Endothelial cell of umbilical vein (primary cell): ENCODE measurements at regions of chr12 and their contacts with region 1.

Region 1: DNA sequence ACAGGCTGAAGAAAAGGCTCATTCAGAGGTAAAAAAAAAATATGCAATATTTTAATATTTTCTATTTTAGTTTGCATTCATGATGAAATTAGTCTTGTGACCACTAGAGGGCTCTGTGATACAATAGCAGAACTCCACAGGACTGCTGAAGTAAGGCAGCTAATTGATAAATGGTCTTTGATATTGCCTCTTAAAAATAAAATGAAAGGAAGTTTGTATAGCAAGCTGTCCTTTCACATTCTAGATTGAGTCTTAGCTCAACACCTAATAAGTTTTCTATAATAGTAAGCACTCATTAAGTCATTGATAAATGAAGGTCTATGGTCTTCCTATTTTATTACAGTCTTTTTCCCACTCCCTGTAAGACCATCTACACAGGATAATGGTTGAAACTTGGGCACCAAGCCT is 315.7 kb downstream of the NAV3 start:
- DNase-seq: peak; percentile 59
- H3K4me3 ChIP-seq: no peak overlapping the region
- H3K27ac ChIP-seq: no peak overlapping the region
- H3K4me1 ChIP-seq: no peaks in the 10 kb centered on the region
- H3K27me3 ChIP-seq: no peaks in the 10 kb centered on the region
- CTCF ChIP-seq: peak; percentile 49 to 54
- POLR2A ChIP-seq: no peak

Region 2: DNA sequence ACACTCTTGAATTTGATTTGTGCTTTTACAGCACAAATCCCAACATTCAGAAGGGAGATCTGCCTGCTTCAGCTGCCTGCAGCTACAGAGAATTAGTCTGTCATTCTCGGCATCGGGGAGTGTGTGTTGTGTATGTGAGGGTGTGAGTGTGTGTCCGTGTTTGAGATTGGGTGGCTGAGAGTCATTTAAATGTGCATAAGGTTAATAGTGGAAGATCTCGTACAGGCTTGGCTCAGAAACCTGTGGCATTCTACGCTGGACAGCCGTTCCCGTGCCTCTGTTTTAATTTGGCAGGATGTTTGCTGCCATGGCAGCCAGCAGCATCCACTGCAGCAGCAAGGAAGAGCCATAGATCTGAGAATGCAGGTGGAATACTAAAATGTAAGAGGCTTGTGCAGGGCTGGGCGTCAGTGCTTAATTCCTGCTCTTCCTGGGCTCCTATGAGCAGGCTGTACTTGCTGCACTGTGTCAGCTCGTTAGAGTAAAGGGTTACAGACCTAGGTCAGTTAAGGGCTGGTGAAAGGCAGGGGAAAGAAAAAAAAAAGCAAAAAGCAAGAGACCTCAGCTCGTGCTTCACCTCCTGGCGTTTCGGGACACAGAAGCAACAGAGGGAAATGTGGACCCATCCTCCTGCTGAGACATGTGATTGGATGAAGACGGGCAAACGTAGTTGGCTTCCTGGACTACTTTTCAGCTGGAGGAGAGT is 110.3 kb before region 1 on chr12:
- CTCF ChIA-PET with region 1: no interaction called
- POLR2A ChIA-PET with region 1: no interaction called
- dilution Hi-C with region 1: no loop called
- intact Hi-C with region 1: no loop called
- DNase-seq: no peak
- H3K4me3 ChIP-seq: no peak overlapping the region
- H3K27ac ChIP-seq: no peak overlapping the region
- H3K4me1 ChIP-seq: no peaks in the 10 kb centered on the region
- H3K27me3 ChIP-seq: no peaks in the 10 kb centered on the region
- CTCF ChIP-seq: no peak
- POLR2A ChIP-seq: no peak

Region 3: DNA sequence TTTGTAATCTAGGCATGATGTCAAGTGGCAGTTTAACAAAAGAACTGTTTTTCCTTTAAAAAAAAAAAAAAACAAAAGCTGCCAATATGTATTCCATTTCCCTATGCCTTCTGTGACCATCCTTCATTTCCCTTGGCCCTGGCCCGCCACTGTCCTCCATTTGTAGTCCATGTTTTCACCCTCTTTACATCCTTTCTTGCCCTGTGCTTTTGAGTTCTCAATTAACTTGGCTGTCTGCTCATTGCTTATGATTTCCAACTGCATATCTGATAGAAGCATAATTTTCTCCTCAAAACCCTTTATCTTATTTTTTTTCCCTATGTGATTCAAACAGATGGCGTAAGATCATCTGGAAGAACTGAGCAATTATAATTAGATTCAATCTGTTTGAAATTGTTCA is 18.2 kb before region 1 on chr12:
- CTCF ChIA-PET with region 1: interaction called, 27 read pairs
- POLR2A ChIA-PET with region 1: no interaction called
- dilution Hi-C with region 1: no loop called
- intact Hi-C with region 1: no loop called
- DNase-seq: no peak
- H3K4me3 ChIP-seq: no peak overlapping the region
- H3K27ac ChIP-seq: no peak overlapping the region
- H3K4me1 ChIP-seq: no peaks in the 10 kb centered on the region
- H3K27me3 ChIP-seq: no peaks in the 10 kb centered on the region
- CTCF ChIP-seq: no peak
- POLR2A ChIP-seq: no peak

Region 4: GRCh38 chr12:78157199-78157598 is 10.8 kb after region 1 on chr12:
- CTCF ChIA-PET with region 1: interaction called, 12 read pairs
- POLR2A ChIA-PET with region 1: no interaction called
- dilution Hi-C with region 1: no loop called
- intact Hi-C with region 1: no loop called
- DNase-seq: no peak
- H3K4me3 ChIP-seq: no peak overlapping the region
- H3K27ac ChIP-seq: no peak overlapping the region
- H3K4me1 ChIP-seq: no peaks in the 10 kb centered on the region
- H3K27me3 ChIP-seq: no peaks in the 10 kb centered on the region
- CTCF ChIP-seq: no peak
- POLR2A ChIP-seq: no peak

Region 5: GRCh38 chr12:78674311-78675090 is 528.1 kb after region 1 on chr12:
- CTCF ChIA-PET with region 1: no interaction called
- POLR2A ChIA-PET with region 1: no interaction called
- dilution Hi-C with region 1: no loop called
- intact Hi-C with region 1: no loop called
- DNase-seq: no peak
- H3K4me3 ChIP-seq: no peak overlapping the region
- H3K27ac ChIP-seq: no peak overlapping the region
- H3K4me1 ChIP-seq: no peaks in the 10 kb centered on the region
- H3K27me3 ChIP-seq: no peaks in the 10 kb centered on the region
- CTCF ChIP-seq: no peak
- POLR2A ChIP-seq: no peak

Region 6: GRCh38 chr12:79344855-79345847 is 1198.8 kb after region 1 on chr12:
- CTCF ChIA-PET with region 1: interaction called, 7 read pairs
- POLR2A ChIA-PET with region 1: no interaction called
- dilution Hi-C with region 1: no loop called
- intact Hi-C with region 1: loop called (anchors 10 kb)
- DNase-seq: peak; percentile 54
- H3K4me3 ChIP-seq: no peak overlapping the region
- H3K27ac ChIP-seq: no peak overlapping the region
- H3K4me1 ChIP-seq: no peaks in the 10 kb centered on the region
- H3K27me3 ChIP-seq: peaks cover 0 to 2% of the 10 kb centered on the region in 2 experiments
- CTCF ChIP-seq: peak; percentile 35 to 51
- POLR2A ChIP-seq: no peak